ENCODE measurements at regions of chr2 and their contacts with region 1.

Region 1: DNA sequence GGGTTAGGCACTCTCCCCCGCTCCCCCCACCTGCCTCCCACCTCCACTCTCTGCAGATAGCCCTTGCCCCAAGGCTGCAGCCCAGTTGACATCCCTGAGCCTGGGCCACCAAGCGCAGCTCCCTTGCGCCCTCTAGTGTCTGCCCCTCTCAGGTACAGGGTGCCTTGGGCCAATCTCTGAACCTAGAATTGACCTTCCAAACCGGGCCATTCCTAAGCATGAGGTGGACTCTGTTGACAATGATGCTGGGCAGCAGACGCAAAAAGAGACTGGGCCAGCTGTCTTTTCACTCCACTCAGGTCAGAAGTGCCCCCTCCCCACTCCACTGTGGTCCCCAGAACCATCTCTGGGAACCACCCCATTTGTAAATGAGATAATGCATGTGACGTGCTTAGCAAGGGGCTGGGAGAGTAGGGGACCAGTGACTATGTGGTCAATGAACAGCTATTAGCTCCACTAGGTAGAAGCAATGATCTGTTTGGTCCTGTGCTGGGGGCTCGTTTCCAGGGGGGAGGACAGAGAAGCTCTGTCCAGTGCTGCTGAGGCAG is 43.3 kb upstream of the PLB1 start:
- DNase-seq: peak; percentile 61 to 86 (median 75)
- ATAC-seq: peak; percentile 92
- H3K4me3 ChIP-seq: no peak overlapping the region
- H3K4me3 Mint-ChIP-seq: no peak overlapping the region
- H3K27ac ChIP-seq: no peak overlapping the region
- H3K27ac Mint-ChIP-seq: no peak overlapping the region
- H3K4me1 ChIP-seq: peaks cover 11% of the 10 kb centered on the region
- H3K4me1 Mint-ChIP-seq: no peaks in the 10 kb centered on the region
- H3K27me3 ChIP-seq: no peaks in the 10 kb centered on the region
- H3K27me3 Mint-ChIP-seq: no peaks in the 10 kb centered on the region
- CTCF ChIP-seq: peak; percentile 89

Region 2: GRCh38 chr2:27703638-27704341 is 748.8 kb before region 1 on chr2:
- CTCF ChIA-PET with region 1: interaction called, 9 read pairs
- POLR2A ChIA-PET with region 1: no interaction called
- intact Hi-C with region 1: loop called (anchors 1 kb)
- DNase-seq: peak; percentile 71 to 91 (median 80)
- ATAC-seq: peak; percentile 91
- H3K4me3 ChIP-seq: no peak overlapping the region
- H3K4me3 Mint-ChIP-seq: no peak overlapping the region
- H3K27ac ChIP-seq: no peak overlapping the region
- H3K27ac Mint-ChIP-seq: no peak overlapping the region
- H3K4me1 ChIP-seq: peaks cover 7% of the 10 kb centered on the region
- H3K4me1 Mint-ChIP-seq: no peaks in the 10 kb centered on the region
- H3K27me3 ChIP-seq: no peaks in the 10 kb centered on the region
- H3K27me3 Mint-ChIP-seq: no peaks in the 10 kb centered on the region
- CTCF ChIP-seq: peak; percentile 97

Region 3: GRCh38 chr2:27754138-27754588 is 698.4 kb before region 1 on chr2:
- CTCF ChIA-PET with region 1: interaction called, 3 read pairs
- POLR2A ChIA-PET with region 1: no interaction called
- intact Hi-C with region 1: loop called (anchors 1 kb)
- DNase-seq: peak; percentile 54 to 76 (median 64)
- ATAC-seq: peak; percentile 71
- H3K4me3 ChIP-seq: no peak overlapping the region
- H3K4me3 Mint-ChIP-seq: no peak overlapping the region
- H3K27ac ChIP-seq: no peak overlapping the region
- H3K27ac Mint-ChIP-seq: no peak overlapping the region
- H3K4me1 ChIP-seq: peaks cover 2% of the 10 kb centered on the region
- H3K4me1 Mint-ChIP-seq: no peaks in the 10 kb centered on the region
- H3K27me3 ChIP-seq: peaks cover 2 to 14% of the 10 kb centered on the region in 2 experiments
- H3K27me3 Mint-ChIP-seq: peaks cover 3% of the 10 kb centered on the region
- CTCF ChIP-seq: peak; percentile 46

Region 4: DNA sequence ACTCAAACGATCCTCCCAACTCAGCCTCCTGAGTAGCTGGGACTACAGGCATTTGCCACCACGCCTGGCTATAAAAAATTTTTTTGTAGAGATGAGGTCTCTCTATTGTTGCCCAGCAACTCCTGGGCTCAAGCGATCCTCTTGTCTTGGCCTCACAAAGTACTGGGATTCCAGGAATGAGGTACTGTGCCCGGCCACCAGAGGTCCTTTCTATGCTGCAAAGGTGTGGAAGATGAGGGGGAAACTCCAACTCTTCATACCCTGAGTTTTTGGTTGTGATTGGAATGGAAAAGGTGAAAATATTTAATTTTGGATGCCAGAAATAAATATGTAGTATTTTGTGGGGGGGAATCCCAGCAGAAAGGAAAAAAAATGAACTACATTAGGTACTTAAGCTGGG is 645.1 kb before region 1 on chr2:
- CTCF ChIA-PET with region 1: interaction called, 3 read pairs
- POLR2A ChIA-PET with region 1: no interaction called
- intact Hi-C with region 1: loop called in 1 of 2 experiments (anchors 5 kb)
- DNase-seq: peak in 5 of 14 experiments; percentile 1 to 24 (median 14)
- ATAC-seq: no peak
- H3K4me3 ChIP-seq: no peak overlapping the region
- H3K4me3 Mint-ChIP-seq: no peak overlapping the region
- H3K27ac ChIP-seq: no peak overlapping the region
- H3K27ac Mint-ChIP-seq: no peak overlapping the region
- H3K4me1 ChIP-seq: no peaks in the 10 kb centered on the region
- H3K4me1 Mint-ChIP-seq: no peaks in the 10 kb centered on the region
- H3K27me3 ChIP-seq: no peaks in the 10 kb centered on the region
- H3K27me3 Mint-ChIP-seq: no peaks in the 10 kb centered on the region
- CTCF ChIP-seq: peak; percentile 11

Region 5: DNA sequence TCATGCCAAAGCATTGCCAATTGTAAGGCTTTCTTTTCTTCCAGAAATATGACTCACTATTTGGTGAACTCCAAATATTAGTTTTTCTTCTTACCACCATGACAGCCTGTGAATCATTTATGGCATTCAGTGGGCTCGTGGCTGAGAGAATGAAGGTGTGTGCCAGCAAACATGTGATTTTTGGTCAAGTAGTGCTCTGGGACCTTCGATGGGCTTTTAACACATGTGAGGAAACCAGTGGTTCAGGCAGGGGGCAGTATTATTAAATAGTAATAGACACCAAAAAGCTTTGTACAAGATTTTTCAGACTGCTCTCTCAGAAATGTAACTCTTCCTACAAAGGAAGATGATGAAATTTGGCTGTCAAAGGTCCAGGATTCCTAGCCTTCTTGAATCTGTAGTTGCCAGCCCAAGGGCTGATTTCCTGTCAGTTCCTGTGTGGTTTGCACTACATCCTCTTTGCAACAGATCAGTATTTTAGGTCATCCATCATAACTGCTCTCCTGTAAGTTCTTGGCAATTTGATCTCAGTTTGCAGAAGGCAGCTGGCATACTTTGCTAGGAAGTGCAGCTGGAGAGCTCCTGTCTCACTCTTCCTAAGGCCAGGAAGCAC is 497.7 kb before region 1 on chr2:
- CTCF ChIA-PET with region 1: no interaction called
- POLR2A ChIA-PET with region 1: no interaction called
- intact Hi-C with region 1: loop called in 1 of 2 experiments (anchors 5 kb)
- DNase-seq: peak in 4 of 14 experiments; percentile 14 to 69 (median 50)
- ATAC-seq: peak; percentile 59
- H3K4me3 ChIP-seq: no peak overlapping the region
- H3K4me3 Mint-ChIP-seq: peak overlapping the region; percentile 46
- H3K27ac ChIP-seq: peak overlapping the region in 1 of 2 donors; percentile 2
- H3K27ac Mint-ChIP-seq: peak overlapping the region; percentile 38
- H3K4me1 ChIP-seq: peaks cover 13% of the 10 kb centered on the region
- H3K4me1 Mint-ChIP-seq: peaks cover 81% of the 10 kb centered on the region
- H3K27me3 ChIP-seq: no peaks in the 10 kb centered on the region
- H3K27me3 Mint-ChIP-seq: no peaks in the 10 kb centered on the region
- CTCF ChIP-seq: no peak

Region 6: DNA sequence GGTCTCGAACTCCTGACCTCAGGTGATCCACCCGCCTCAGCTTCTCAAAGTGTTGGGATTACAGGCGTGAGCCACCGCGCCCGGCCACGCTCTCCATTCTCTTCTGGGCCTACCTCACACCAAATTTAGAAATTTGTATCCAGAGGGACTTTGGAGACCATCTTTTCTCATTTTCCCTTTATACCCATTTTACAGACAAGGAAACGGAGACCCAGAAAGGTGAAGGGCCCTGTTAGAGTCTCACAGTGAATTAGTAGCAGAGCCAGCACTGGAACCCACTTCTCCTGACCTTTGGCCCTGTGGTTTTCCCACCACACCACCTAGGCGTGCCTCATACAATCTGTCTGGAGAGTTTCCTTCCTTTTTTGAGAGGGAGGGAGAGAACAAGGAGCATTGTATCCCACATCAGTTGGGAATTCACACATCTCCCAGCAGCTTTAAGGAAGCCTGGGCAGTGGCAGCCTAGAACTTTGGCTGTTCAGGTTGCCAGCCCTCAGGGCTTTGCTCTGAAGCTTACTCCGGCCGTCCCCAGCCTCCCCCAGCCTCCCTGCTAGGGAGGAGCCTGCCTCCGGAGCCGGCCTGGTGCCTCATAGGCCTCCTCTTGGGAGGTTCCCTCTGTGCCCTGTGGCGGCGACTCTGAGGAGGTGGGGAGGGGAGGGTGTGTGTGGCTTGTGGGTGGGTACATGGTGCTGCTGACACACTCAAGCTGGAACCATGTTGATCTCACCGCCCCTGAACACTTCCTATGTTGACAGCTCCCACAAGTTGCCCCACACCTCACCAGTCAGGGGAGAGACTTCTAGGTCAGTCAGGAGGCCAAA is 46.1 kb before region 1 on chr2:
- CTCF ChIA-PET with region 1: no interaction called
- POLR2A ChIA-PET with region 1: no interaction called
- intact Hi-C with region 1: loop called (anchors 5 kb)
- DNase-seq: peak in 11 of 14 experiments; percentile 27 to 90 (median 62)
- ATAC-seq: peak; percentile 57
- H3K4me3 ChIP-seq: no peak overlapping the region
- H3K4me3 Mint-ChIP-seq: peak overlapping the region; percentile 60
- H3K27ac ChIP-seq: peak overlapping the region in 1 of 2 donors; percentile 75
- H3K27ac Mint-ChIP-seq: peak overlapping the region; percentile 90
- H3K4me1 ChIP-seq: peaks cover 90% of the 10 kb centered on the region
- H3K4me1 Mint-ChIP-seq: peaks cover 78% of the 10 kb centered on the region
- H3K27me3 ChIP-seq: no peaks in the 10 kb centered on the region
- H3K27me3 Mint-ChIP-seq: no peaks in the 10 kb centered on the region
- CTCF ChIP-seq: no peak

Region 7: DNA sequence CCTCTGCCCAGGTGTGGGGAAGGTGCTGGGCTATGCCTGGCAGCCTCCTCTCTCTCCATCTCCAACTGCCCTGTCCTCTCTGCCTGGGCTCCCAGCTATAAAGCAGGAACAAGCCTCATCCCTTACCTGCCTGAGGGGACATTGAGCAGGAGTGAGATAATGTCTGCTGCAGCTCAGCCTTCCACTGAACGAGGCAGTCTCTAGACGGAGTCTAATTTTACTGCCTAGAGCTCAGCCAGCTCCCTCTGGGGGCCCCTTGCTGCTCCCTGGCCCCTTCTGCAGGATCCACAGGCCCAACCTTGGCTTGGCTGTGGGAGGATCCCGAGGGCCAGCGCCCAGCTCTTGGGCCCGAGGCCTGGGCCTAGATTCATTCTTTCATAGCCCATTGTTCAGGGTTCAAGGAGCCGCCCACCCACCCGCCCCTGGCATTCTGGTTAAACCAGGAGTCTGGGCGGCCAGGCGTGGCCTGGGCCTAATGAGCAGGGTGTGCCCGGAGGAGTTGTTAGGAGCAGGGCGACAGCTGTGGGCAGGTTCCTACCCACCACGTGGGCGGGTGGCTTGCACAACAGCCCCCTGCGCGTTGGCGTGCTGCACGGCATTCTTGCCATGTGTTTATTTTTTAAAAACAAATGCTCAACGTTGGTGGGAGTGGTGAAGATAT is 15.3 kb before region 1 on chr2:
- CTCF ChIA-PET with region 1: no interaction called
- POLR2A ChIA-PET with region 1: no interaction called
- intact Hi-C with region 1: no loop called
- DNase-seq: peak in 1 of 14 experiments; percentile 34
- ATAC-seq: no peak
- H3K4me3 ChIP-seq: no peak overlapping the region
- H3K4me3 Mint-ChIP-seq: no peak overlapping the region
- H3K27ac ChIP-seq: no peak overlapping the region
- H3K27ac Mint-ChIP-seq: no peak overlapping the region
- H3K4me1 ChIP-seq: peaks cover 5% of the 10 kb centered on the region
- H3K4me1 Mint-ChIP-seq: no peaks in the 10 kb centered on the region
- H3K27me3 ChIP-seq: no peaks in the 10 kb centered on the region
- H3K27me3 Mint-ChIP-seq: no peaks in the 10 kb centered on the region
- CTCF ChIP-seq: no peak

Measured in CD4-positive, alpha-beta T cell (primary cell).